CD4-positive, alpha-beta memory T cell (primary cell): ENCODE measurements at regions of chrX and their contacts with region 1.

Region 1: GRCh38 chrX:108070891-108071290 is 20.5 kb downstream of the PSMD10 start:
- DNase-seq: no peak
- H3K4me3 ChIP-seq: no peak overlapping the region
- H3K4me3 Mint-ChIP-seq: no peak overlapping the region
- H3K27ac ChIP-seq: no peak overlapping the region
- H3K27ac Mint-ChIP-seq: peak overlapping the region in 4 of 7 donors; percentile 29 to 57 (median 32)
- H3K4me1 ChIP-seq: no peaks in the 10 kb centered on the region
- H3K4me1 Mint-ChIP-seq: peaks cover 0 to 4% (median 2%) of the 10 kb centered on the region in 4 donors
- H3K27me3 ChIP-seq: no peaks in the 10 kb centered on the region
- H3K27me3 Mint-ChIP-seq: no peaks in the 10 kb centered on the region

Region 2: DNA sequence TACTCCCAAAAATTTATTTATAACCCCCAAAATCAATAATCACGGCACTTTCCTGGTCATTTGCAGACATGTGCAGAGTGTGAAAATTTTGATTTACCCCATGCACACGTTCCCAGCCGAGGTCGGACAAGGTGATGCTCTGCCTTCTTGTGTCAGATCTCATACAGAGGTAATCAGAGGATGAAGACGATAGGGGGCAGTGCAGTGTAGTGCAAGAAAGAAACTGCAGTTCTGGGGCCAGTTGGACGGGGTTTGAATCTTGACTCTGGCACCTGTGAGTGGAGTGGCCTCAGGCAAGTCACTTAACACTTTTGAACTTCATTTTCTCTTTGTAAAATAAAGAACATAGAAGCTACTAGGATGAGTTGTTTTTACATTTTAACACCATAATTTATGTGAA is 533.1 kb before region 1 on chrX:
- CTCF ChIA-PET with region 1: no interaction called
- POLR2A ChIA-PET with region 1: no interaction called
- intact Hi-C with region 1: loop called (anchors 5 kb)
- DNase-seq: peak; percentile 19 to 28 (median 23)
- H3K4me3 ChIP-seq: no peak overlapping the region
- H3K4me3 Mint-ChIP-seq: no peak overlapping the region
- H3K27ac ChIP-seq: no peak overlapping the region
- H3K27ac Mint-ChIP-seq: no peak overlapping the region
- H3K4me1 ChIP-seq: no peaks in the 10 kb centered on the region
- H3K4me1 Mint-ChIP-seq: no peaks in the 10 kb centered on the region
- H3K27me3 ChIP-seq: no peaks in the 10 kb centered on the region
- H3K27me3 Mint-ChIP-seq: peaks cover 2 to 7% of the 10 kb centered on the region in 2 donors

Region 3: DNA sequence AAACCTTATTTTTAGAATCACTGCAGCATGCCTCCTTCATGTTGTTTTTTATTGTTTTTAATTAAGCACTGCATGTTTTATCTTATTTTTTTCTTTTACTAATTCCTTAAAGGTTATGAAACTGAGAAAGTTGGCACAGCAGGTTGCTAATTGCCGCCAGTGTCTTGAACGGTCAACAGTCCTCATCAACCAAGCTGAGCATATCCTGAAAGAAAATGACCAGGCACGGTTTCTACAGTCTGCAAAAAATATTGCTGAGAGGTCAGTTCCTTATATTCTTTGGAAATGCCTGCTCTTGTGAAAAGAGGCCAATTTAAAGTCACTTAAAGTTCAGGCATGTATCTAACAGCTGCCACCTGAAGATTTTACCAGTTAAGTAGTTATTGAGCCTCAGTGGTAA is 165.5 kb before region 1 on chrX:
- CTCF ChIA-PET with region 1: no interaction called
- POLR2A ChIA-PET with region 1: no interaction called
- intact Hi-C with region 1: loop called (anchors 5 kb)
- DNase-seq: no peak
- H3K4me3 ChIP-seq: no peak overlapping the region
- H3K4me3 Mint-ChIP-seq: no peak overlapping the region
- H3K27ac ChIP-seq: no peak overlapping the region
- H3K27ac Mint-ChIP-seq: no peak overlapping the region
- H3K4me1 ChIP-seq: no peaks in the 10 kb centered on the region
- H3K4me1 Mint-ChIP-seq: no peaks in the 10 kb centered on the region
- H3K27me3 ChIP-seq: no peaks in the 10 kb centered on the region
- H3K27me3 Mint-ChIP-seq: no peaks in the 10 kb centered on the region

Region 4: GRCh38 chrX:107978707-107979307 is 92.1 kb before region 1 on chrX:
- CTCF ChIA-PET with region 1: no interaction called
- POLR2A ChIA-PET with region 1: no interaction called
- intact Hi-C with region 1: loop called (anchors 1 kb)
- DNase-seq: peak in 1 of 5 donors; percentile 12
- H3K4me3 ChIP-seq: no peak overlapping the region
- H3K4me3 Mint-ChIP-seq: peak overlapping the region in 1 of 8 donors; percentile 26
- H3K27ac ChIP-seq: no peak overlapping the region
- H3K27ac Mint-ChIP-seq: peak overlapping the region in 2 of 7 donors; percentile 24 to 47
- H3K4me1 ChIP-seq: no peaks in the 10 kb centered on the region
- H3K4me1 Mint-ChIP-seq: peaks cover 0 to 4% (median 1%) of the 10 kb centered on the region in 4 donors
- H3K27me3 ChIP-seq: no peaks in the 10 kb centered on the region
- H3K27me3 Mint-ChIP-seq: no peaks in the 10 kb centered on the region

Region 5: DNA sequence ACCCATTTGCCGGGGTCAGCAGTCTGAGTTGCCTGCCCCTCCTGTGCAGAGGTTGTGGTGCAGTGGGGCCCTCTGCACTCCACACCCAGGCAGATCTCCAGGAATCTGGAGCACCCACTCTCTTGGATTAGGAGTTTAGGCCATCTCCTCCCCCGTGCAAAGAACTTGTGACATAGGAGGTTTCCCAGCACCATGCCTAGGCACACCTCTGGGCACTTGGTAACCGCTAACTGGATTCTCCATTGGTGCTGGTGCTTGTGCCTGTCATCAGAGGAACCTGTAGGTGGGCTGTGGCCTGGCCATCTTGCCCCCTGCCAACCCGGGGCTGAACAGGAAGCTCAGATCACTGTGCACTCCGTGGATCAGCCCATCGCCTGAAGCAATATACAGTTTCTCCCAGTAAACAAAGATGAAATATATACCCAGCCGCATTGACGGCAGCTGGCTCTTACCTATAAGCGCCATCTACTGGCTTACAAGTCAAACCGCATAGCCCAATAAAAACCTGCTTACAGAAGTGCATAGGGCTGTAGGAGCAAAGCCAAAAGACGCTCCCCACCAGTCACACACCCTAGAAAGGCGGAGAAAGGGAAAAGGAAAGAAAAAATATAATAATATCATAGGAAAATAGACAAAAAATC is 69.6 kb before region 1 on chrX:
- CTCF ChIA-PET with region 1: interaction called, 15 read pairs
- POLR2A ChIA-PET with region 1: no interaction called
- intact Hi-C with region 1: no loop called
- DNase-seq: peak; percentile 37 to 63 (median 60)
- H3K4me3 ChIP-seq: no peak overlapping the region
- H3K4me3 Mint-ChIP-seq: peak overlapping the region in 5 of 8 donors; percentile 1 to 72 (median 27)
- H3K27ac ChIP-seq: no peak overlapping the region
- H3K27ac Mint-ChIP-seq: peak overlapping the region in 4 of 7 donors; percentile 42 to 80 (median 72)
- H3K4me1 ChIP-seq: no peaks in the 10 kb centered on the region
- H3K4me1 Mint-ChIP-seq: peaks cover 3 to 11% (median 6%) of the 10 kb centered on the region in 4 donors
- H3K27me3 ChIP-seq: no peaks in the 10 kb centered on the region
- H3K27me3 Mint-ChIP-seq: peaks cover 1 to 2% of the 10 kb centered on the region in 2 donors

Region 6: GRCh38 chrX:108020631-108021030 is 50.3 kb before region 1 on chrX:
- CTCF ChIA-PET with region 1: interaction called, 38 read pairs
- POLR2A ChIA-PET with region 1: interaction called, 3 read pairs
- intact Hi-C with region 1: loop called (anchors 1 kb)
- DNase-seq: peak in 4 of 5 donors; percentile 24 to 49 (median 33)
- H3K4me3 ChIP-seq: peak overlapping the region; percentile 26 to 36
- H3K4me3 Mint-ChIP-seq: peak overlapping the region; percentile 79 to 95 (median 90)
- H3K27ac ChIP-seq: peak overlapping the region; percentile 44
- H3K27ac Mint-ChIP-seq: peak overlapping the region; percentile 76 to 99 (median 96)
- H3K4me1 ChIP-seq: peaks cover 72% of the 10 kb centered on the region
- H3K4me1 Mint-ChIP-seq: peaks cover 47 to 93% (median 73%) of the 10 kb centered on the region in 4 donors
- H3K27me3 ChIP-seq: no peaks in the 10 kb centered on the region
- H3K27me3 Mint-ChIP-seq: no peaks in the 10 kb centered on the region

Region 7: GRCh38 chrX:108105473-108105872 is 34.6 kb after region 1 on chrX:
- CTCF ChIA-PET with region 1: no interaction called
- POLR2A ChIA-PET with region 1: no interaction called
- intact Hi-C with region 1: no loop called
- DNase-seq: no peak
- H3K4me3 ChIP-seq: no peak overlapping the region
- H3K4me3 Mint-ChIP-seq: no peak overlapping the region
- H3K27ac ChIP-seq: no peak overlapping the region
- H3K27ac Mint-ChIP-seq: no peak overlapping the region
- H3K4me1 ChIP-seq: no peaks in the 10 kb centered on the region
- H3K4me1 Mint-ChIP-seq: peaks cover 0 to 3% (median 0%) of the 10 kb centered on the region in 4 donors
- H3K27me3 ChIP-seq: no peaks in the 10 kb centered on the region
- H3K27me3 Mint-ChIP-seq: no peaks in the 10 kb centered on the region

Region 8: DNA sequence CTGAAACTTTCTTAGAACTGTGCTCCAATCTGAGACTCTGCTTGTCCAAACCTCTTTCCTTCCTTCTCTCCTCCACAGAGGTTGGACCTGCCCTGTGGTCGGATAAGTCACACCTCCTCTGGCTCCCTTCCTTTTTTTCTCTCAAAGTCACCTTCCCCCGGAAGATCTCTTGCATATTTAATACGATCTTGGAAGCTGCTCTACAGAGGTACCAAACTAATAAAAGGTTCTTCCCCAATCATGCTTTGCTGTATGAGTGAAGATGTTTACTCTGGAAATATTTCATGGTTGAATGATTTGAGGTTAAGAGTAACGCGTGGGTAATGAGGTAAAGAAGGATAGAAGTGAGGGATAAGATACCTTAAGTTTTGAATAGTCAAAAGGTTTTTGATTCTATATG is 186.7 kb after region 1 on chrX:
- CTCF ChIA-PET with region 1: no interaction called
- POLR2A ChIA-PET with region 1: no interaction called
- intact Hi-C with region 1: no loop called
- DNase-seq: no peak
- H3K4me3 ChIP-seq: no peak overlapping the region
- H3K4me3 Mint-ChIP-seq: no peak overlapping the region
- H3K27ac ChIP-seq: no peak overlapping the region
- H3K27ac Mint-ChIP-seq: no peak overlapping the region
- H3K4me1 ChIP-seq: no peaks in the 10 kb centered on the region
- H3K4me1 Mint-ChIP-seq: no peaks in the 10 kb centered on the region
- H3K27me3 ChIP-seq: no peaks in the 10 kb centered on the region
- H3K27me3 Mint-ChIP-seq: peaks cover 2 to 4% of the 10 kb centered on the region in 2 donors